Left ventricle myocardium inferior (tissue), 1 donor: ENCODE measurements at regions of chrX and their contacts with region 1.

Region 1: GRCh38 chrX:138128027-138128671 is 562.2 kb downstream of the ZIC3 start:
- DNase-seq: no peak
- H3K4me3 ChIP-seq: no peak overlapping the region
- H3K27ac ChIP-seq: no peak overlapping the region
- H3K4me1 ChIP-seq: no peaks in the 10 kb centered on the region
- H3K27me3 ChIP-seq: no peaks in the 10 kb centered on the region
- CTCF ChIP-seq: peak; percentile 60

Region 2: GRCh38 chrX:138157850-138158249 is 29.7 kb after region 1 on chrX:
- intact Hi-C with region 1: no loop called
- DNase-seq: no peak
- H3K4me3 ChIP-seq: no peak overlapping the region
- H3K27ac ChIP-seq: no peak overlapping the region
- H3K4me1 ChIP-seq: no peaks in the 10 kb centered on the region
- H3K27me3 ChIP-seq: no peaks in the 10 kb centered on the region
- CTCF ChIP-seq: no peak

Region 3: DNA sequence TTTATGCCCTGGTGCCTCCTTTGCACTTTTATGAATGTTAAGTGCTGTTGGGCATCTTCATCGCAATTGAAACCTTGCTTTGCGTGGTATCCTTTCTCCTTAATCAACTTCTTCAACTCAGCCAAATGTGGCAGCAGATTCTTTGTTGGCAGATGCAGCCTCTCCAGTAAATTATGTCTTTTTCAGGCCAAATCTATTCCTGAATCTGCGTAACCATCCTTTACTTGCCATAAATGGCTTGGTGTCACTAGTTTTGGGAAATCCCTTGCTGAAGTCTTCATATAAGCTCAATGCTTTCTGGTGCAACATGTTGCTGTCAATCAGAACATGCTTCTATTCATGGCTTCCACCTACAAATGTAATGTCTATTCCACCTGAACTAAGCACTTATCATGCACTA is 125.9 kb after region 1 on chrX:
- intact Hi-C with region 1: no loop called
- DNase-seq: no peak
- H3K4me3 ChIP-seq: no peak overlapping the region
- H3K27ac ChIP-seq: no peak overlapping the region
- H3K4me1 ChIP-seq: no peaks in the 10 kb centered on the region
- H3K27me3 ChIP-seq: no peaks in the 10 kb centered on the region
- CTCF ChIP-seq: no peak

Region 4: GRCh38 chrX:138745196-138745595 is 617.0 kb after region 1 on chrX:
- intact Hi-C with region 1: loop called (anchors 10 kb)
- DNase-seq: no peak
- H3K4me3 ChIP-seq: no peak overlapping the region
- H3K27ac ChIP-seq: no peak overlapping the region
- H3K4me1 ChIP-seq: no peaks in the 10 kb centered on the region
- H3K27me3 ChIP-seq: no peaks in the 10 kb centered on the region
- CTCF ChIP-seq: peak; percentile 71